Panc1 (cell line): ENCODE measurements at regions of chr5 and their contacts with region 1.

Region 1: GRCh38 chr5:141960449-141961202 is 2.6 kb upstream of the PCDH12 start:
- DNase-seq: peak; percentile 64
- ATAC-seq: peak; percentile 94
- H3K4me3 ChIP-seq: no peak overlapping the region
- H3K27ac ChIP-seq: no peak overlapping the region
- H3K4me1 ChIP-seq: no peaks in the 10 kb centered on the region
- H3K27me3 ChIP-seq: no peaks in the 10 kb centered on the region
- CTCF ChIP-seq: peak; percentile 87

Region 2: GRCh38 chr5:141691867-141692532 is 268.6 kb before region 1 on chr5:
- CTCF ChIA-PET with region 1: interaction called, 30 read pairs
- POLR2A ChIA-PET with region 1: no interaction called
- in situ Hi-C with region 1: no loop called
- intact Hi-C with region 1: loop called (anchors 1 kb)
- DNase-seq: peak; percentile 50
- ATAC-seq: peak; percentile 93
- H3K4me3 ChIP-seq: peak overlapping the region; percentile 30 to 67
- H3K27ac ChIP-seq: no peak overlapping the region
- H3K4me1 ChIP-seq: no peaks in the 10 kb centered on the region
- H3K27me3 ChIP-seq: peaks cover 3% of the 10 kb centered on the region
- CTCF ChIP-seq: peak; percentile 98

Region 3: GRCh38 chr5:141889282-141889871 is 71.2 kb before region 1 on chr5:
- CTCF ChIA-PET with region 1: interaction called, 9 read pairs
- POLR2A ChIA-PET with region 1: no interaction called
- in situ Hi-C with region 1: no loop called
- intact Hi-C with region 1: loop called (anchors 1 kb)
- DNase-seq: no peak
- ATAC-seq: peak; percentile 78
- H3K4me3 ChIP-seq: no peak overlapping the region
- H3K27ac ChIP-seq: no peak overlapping the region
- H3K4me1 ChIP-seq: no peaks in the 10 kb centered on the region
- H3K27me3 ChIP-seq: peaks cover 17% of the 10 kb centered on the region
- CTCF ChIP-seq: peak; percentile 71; the same call in 1 of the 2 replicates